ENCODE measurements at regions of chr4 and their contacts with region 1.

Region 1: GRCh38 chr4:38782452-38783108 is at the start of gene TLR10:
- DNase-seq: peak; percentile 56
- H3K4me3 ChIP-seq: no peak within 1 kb of the TSS
- H3K27ac ChIP-seq: no peak within 1 kb of the TSS
- H3K4me1 ChIP-seq: no peaks in the 10 kb centered on the region
- H3K27me3 ChIP-seq: peaks cover 0 to 2% of the 10 kb centered on the region in 2 experiments
- CTCF ChIP-seq: peak; percentile 38 to 55
- POLR2A ChIP-seq: no peak
- total RNA-seq, gene TLR10: not detected in 2 replicates

Region 2: GRCh38 chr4:38062088-38062893 is 720.3 kb before region 1 on chr4:
- CTCF ChIA-PET with region 1: interaction called, 7 read pairs
- POLR2A ChIA-PET with region 1: no interaction called
- dilution Hi-C with region 1: no loop called
- intact Hi-C with region 1: loop called (anchors 2 kb)
- DNase-seq: peak; percentile 82
- H3K4me3 ChIP-seq: peak overlapping the region in 2 of 3 experiments; percentile 8 to 64
- H3K27ac ChIP-seq: no peak overlapping the region
- H3K4me1 ChIP-seq: peaks cover 2% of the 10 kb centered on the region
- H3K27me3 ChIP-seq: no peaks in the 10 kb centered on the region
- CTCF ChIP-seq: peak; percentile 77 to 78
- POLR2A ChIP-seq: no peak

Region 3: GRCh38 chr4:38069271-38069760 is 713.3 kb before region 1 on chr4:
- CTCF ChIA-PET with region 1: interaction called, 11 read pairs
- POLR2A ChIA-PET with region 1: no interaction called
- dilution Hi-C with region 1: no loop called
- intact Hi-C with region 1: no loop called
- DNase-seq: peak; percentile 38
- H3K4me3 ChIP-seq: no peak overlapping the region
- H3K27ac ChIP-seq: no peak overlapping the region
- H3K4me1 ChIP-seq: peaks cover 10% of the 10 kb centered on the region
- H3K27me3 ChIP-seq: no peaks in the 10 kb centered on the region
- CTCF ChIP-seq: no peak
- POLR2A ChIP-seq: no peak

Region 4: GRCh38 chr4:38128478-38129459 is 653.8 kb before region 1 on chr4:
- CTCF ChIA-PET with region 1: no interaction called
- POLR2A ChIA-PET with region 1: no interaction called
- dilution Hi-C with region 1: no loop called
- intact Hi-C with region 1: no loop called
- DNase-seq: no peak
- H3K4me3 ChIP-seq: no peak overlapping the region
- H3K27ac ChIP-seq: no peak overlapping the region
- H3K4me1 ChIP-seq: peaks cover 10% of the 10 kb centered on the region
- H3K27me3 ChIP-seq: no peaks in the 10 kb centered on the region
- CTCF ChIP-seq: no peak
- POLR2A ChIP-seq: no peak

Region 5: DNA sequence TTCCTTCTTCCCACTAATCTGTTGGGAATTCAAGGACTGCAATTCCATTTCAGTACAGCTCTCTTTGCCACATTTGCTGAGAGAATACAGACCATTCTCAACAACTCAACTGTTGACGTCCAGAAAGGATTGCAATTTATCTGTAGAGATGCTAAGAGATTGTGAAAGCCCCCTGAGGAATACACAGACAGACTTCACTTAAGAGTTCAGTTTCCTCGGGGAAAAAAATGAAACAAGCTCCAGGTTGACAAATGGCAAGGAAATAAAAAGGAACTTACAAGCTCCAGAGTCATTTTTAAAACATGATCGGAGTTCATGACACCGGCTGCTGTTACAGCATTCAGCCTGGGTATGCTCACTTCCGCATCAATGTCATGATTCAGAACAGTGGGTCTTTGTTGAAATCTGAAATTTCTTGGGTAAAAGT is 13.6 kb before region 1 on chr4:
- CTCF ChIA-PET with region 1: interaction called, 56 read pairs
- POLR2A ChIA-PET with region 1: no interaction called
- dilution Hi-C with region 1: no loop called
- intact Hi-C with region 1: no loop called
- DNase-seq: no peak
- H3K4me3 ChIP-seq: no peak overlapping the region
- H3K27ac ChIP-seq: no peak overlapping the region
- H3K4me1 ChIP-seq: no peaks in the 10 kb centered on the region
- H3K27me3 ChIP-seq: peaks cover 7 to 12% of the 10 kb centered on the region in 2 experiments
- CTCF ChIP-seq: no peak
- POLR2A ChIP-seq: no peak

Region 6: DNA sequence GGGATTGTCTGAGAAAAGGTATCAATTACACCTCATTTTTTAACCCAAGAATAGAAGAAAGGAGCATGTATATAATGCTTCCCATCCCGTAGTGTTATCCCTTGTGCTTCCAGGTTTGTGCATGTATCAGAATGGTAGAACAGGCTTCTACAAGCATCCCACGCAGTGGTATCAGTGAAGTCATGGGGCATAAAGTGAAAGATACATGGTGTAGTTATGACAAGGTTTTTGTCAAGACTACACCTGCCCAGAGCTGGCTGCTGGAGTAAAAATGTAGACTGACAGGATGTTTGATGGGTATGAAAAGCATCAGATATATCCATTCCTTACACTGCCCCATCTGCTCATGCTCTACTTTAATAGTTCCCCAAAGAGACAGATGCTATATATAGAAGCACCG is 12.5 kb after region 1 on chr4:
- CTCF ChIA-PET with region 1: interaction called, 26 read pairs
- POLR2A ChIA-PET with region 1: no interaction called
- dilution Hi-C with region 1: no loop called
- intact Hi-C with region 1: no loop called
- DNase-seq: no peak
- H3K4me3 ChIP-seq: no peak overlapping the region
- H3K27ac ChIP-seq: no peak overlapping the region
- H3K4me1 ChIP-seq: no peaks in the 10 kb centered on the region
- H3K27me3 ChIP-seq: no peaks in the 10 kb centered on the region
- CTCF ChIP-seq: no peak
- POLR2A ChIP-seq: no peak

Region 7: GRCh38 chr4:38804654-38805295 is 22.2 kb after region 1 on chr4 and contains the start of gene TLR1:
- CTCF ChIA-PET with region 1: interaction called, 31 read pairs
- POLR2A ChIA-PET with region 1: no interaction called
- dilution Hi-C with region 1: no loop called
- intact Hi-C with region 1: no loop called
- DNase-seq: peak; percentile 89
- H3K4me3 ChIP-seq: peak within 1 kb of the TSS in 2 of 3 experiments; percentile 11 to 54
- H3K27ac ChIP-seq: peak within 1 kb of the TSS; percentile 30
- H3K4me1 ChIP-seq: peaks cover 19% of the 10 kb centered on the region
- H3K27me3 ChIP-seq: no peaks in the 10 kb centered on the region
- CTCF ChIP-seq: peak; percentile 15 to 36
- POLR2A ChIP-seq: no peak
- total RNA-seq, gene TLR1: 2.7 and 4.6 TPM in 2 replicates

Region 8: DNA sequence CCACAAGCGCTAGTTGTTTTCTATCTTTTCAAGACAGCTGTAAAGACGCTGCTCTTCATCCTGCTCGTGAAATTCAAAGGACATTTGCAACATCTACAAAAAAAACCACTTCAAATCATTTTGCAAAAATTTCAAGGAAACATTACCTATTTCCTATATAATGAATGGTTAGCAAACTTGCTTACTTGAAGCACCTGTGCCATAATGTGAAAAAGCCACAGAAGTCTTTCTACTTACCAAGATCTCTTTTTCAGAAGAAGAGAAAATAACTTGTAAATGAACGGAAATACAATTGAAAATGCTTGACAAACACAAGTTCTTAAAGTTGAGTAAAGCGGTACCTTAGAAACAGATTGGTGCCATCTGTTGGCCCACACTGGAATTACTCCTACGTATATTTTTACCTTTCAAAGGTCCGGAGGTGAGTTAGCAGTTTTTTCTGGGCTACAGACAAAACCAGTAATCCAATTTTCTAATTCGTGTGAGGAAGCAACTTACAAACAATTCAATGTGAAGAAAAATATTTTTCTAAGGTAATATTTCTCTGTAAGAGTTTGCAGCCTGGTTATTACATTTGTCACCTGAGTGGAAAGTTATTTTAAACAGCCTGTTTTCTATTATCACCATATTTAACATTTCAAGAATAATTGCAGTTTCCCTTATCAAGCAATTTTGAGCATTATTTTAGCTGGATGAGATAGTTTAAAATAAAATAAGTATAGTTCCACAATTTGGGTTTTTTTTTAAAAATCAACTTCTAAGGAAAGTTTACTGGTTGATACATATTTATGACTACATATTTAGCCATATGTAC is 74.2 kb after region 1 on chr4 and contains the start of gene TLR6:
- CTCF ChIA-PET with region 1: interaction called, 13 read pairs
- POLR2A ChIA-PET with region 1: no interaction called
- dilution Hi-C with region 1: no loop called
- intact Hi-C with region 1: no loop called
- DNase-seq: peak; percentile 73
- H3K4me3 ChIP-seq: peak within 1 kb of the TSS in 1 of 3 experiments; percentile 34
- H3K27ac ChIP-seq: peak within 1 kb of the TSS; percentile 72
- H3K4me1 ChIP-seq: peaks cover 24% of the 10 kb centered on the region
- H3K27me3 ChIP-seq: peaks cover 0 to 2% of the 10 kb centered on the region in 2 experiments
- CTCF ChIP-seq: peak; percentile 51 to 60
- POLR2A ChIP-seq: no peak
- total RNA-seq, gene TLR6: 1.1 and 1.7 TPM in 2 replicates

Region 9: GRCh38 chr4:38914854-38915253 is 132.3 kb after region 1 on chr4:
- CTCF ChIA-PET with region 1: no interaction called
- POLR2A ChIA-PET with region 1: no interaction called
- dilution Hi-C with region 1: no loop called
- intact Hi-C with region 1: no loop called
- DNase-seq: no peak
- H3K4me3 ChIP-seq: no peak overlapping the region
- H3K27ac ChIP-seq: no peak overlapping the region
- H3K4me1 ChIP-seq: no peaks in the 10 kb centered on the region
- H3K27me3 ChIP-seq: no peaks in the 10 kb centered on the region
- CTCF ChIP-seq: no peak
- POLR2A ChIP-seq: no peak

Measured in endothelial cell of umbilical vein (primary cell).